ENCODE measurements at regions of chr14 and their contacts with region 1.

Region 1: GRCh38 chr14:103333754-103334643 is at the start of gene EIF5:
- DNase-seq: peak; percentile 94
- ATAC-seq: peak; percentile 92
- H3K4me3 ChIP-seq: peak within 1 kb of the TSS; percentile 90 to 98 (median 97)
- H3K27ac ChIP-seq: peak within 1 kb of the TSS; percentile 97
- H3K4me1 ChIP-seq: peaks cover 60% of the 10 kb centered on the region
- H3K27me3 ChIP-seq: no peaks in the 10 kb centered on the region; a peak in 1 of 5 replicates
- CTCF ChIP-seq: peak; percentile 23; the same call in 1 of the 2 replicates
- EP300 ChIP-seq: peak in 1 of 2 experiments; percentile 47; a peak in 1 of 4 replicates
- POLR2A ChIP-seq: peak; percentile 97 to 99
- RAD21 ChIP-seq: peak; percentile 66
- total RNA-seq, gene EIF5: 281 and 333 TPM in 2 replicates

Region 2: DNA sequence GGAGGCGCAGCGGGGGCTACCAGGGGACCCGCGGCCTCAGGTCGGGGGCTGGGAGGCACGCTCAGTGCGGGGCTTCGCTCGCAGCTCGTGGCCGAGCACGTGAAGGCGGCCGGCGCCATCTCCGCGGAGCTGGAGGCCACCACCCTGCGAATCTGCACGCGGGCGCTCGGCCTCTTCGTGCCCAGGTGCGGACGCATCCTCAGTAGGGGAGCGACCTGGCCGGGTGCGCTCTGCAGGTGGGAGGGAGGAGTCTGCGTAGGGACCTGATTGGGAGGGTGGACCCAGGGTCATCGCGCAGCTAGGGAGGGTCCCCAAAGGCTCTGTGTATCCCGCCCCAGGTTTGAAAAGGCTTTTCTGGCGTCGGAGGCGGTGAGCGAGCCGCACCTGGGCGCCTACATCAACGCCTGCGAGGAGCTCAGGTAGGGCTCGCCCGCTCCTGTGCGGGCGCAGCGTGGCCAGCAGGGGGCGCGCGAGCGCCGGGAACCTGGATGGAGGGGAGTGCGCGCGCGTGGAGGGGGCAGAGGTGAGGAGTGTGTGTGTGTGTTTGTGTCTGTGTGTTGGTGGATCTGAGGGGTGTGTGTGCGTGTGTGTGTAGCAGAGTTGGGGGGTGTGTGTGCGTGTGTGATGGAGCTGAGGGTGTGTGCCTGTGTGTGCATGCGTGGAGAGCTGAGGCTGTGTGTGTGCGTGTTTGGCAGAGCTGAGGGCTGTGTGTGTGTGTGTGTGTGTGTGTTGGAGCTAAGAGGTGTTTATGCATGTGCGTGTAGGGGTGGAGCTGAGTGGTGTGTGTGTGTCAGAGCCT is 229.1 kb before region 1 on chr14:
- CTCF ChIA-PET with region 1: no interaction called
- POLR2A ChIA-PET with region 1: interaction called, 23 read pairs
- in situ Hi-C with region 1: no loop called
- intact Hi-C with region 1: no loop called
- DNase-seq: no peak
- ATAC-seq: peak; percentile 54
- H3K4me3 ChIP-seq: peak overlapping the region; percentile 43 to 71 (median 61)
- H3K27ac ChIP-seq: peak overlapping the region; percentile 76
- H3K4me1 ChIP-seq: peaks cover 87% of the 10 kb centered on the region
- H3K27me3 ChIP-seq: no peaks in the 10 kb centered on the region
- CTCF ChIP-seq: peak; percentile 99
- EP300 ChIP-seq: no peak
- POLR2A ChIP-seq: peak in 1 of 2 experiments; percentile 47; a peak in 1 of 4 replicates
- RAD21 ChIP-seq: peak; percentile 92

Region 3: DNA sequence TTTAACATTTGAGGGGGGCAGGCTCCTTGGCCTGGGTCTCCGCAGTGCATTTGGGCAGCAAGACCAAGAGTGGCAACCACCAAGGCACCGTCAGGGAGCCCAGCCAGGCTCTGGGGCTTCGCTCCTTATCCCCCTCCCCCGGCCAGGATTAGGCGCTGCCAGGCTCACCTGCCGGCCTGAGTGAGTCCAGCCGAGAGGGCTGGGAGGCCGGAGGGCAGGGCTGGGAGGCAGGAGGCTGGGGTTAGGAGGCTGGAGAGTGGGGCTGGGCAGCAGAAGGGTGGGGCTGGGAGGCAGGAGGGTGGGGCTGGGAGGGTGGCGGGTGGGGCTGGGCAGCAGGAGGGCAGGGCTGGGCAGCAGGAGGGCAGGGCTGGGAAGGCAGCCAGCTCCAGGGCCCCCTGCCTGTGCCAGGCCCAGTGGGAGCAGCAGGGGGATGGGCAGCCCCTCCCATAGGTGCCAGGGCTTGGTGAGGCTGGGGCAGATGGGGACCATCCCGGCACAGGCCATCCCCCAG is 101.6 kb before region 1 on chr14:
- CTCF ChIA-PET with region 1: no interaction called
- POLR2A ChIA-PET with region 1: no interaction called
- in situ Hi-C with region 1: no loop called
- intact Hi-C with region 1: no loop called
- DNase-seq: no peak
- ATAC-seq: no peak
- H3K4me3 ChIP-seq: no peak overlapping the region
- H3K27ac ChIP-seq: no peak overlapping the region
- H3K4me1 ChIP-seq: peaks cover 13% of the 10 kb centered on the region; the same call in 1 of the 2 replicates
- H3K27me3 ChIP-seq: peaks cover 6 to 20% of the 10 kb centered on the region in 2 experiments
- CTCF ChIP-seq: no peak
- EP300 ChIP-seq: no peak
- POLR2A ChIP-seq: no peak
- RAD21 ChIP-seq: no peak

Region 4: GRCh38 chr14:103273145-103273744 is 60.8 kb before region 1 on chr14:
- CTCF ChIA-PET with region 1: no interaction called
- POLR2A ChIA-PET with region 1: no interaction called
- in situ Hi-C with region 1: no loop called
- intact Hi-C with region 1: no loop called
- DNase-seq: no peak
- ATAC-seq: no peak
- H3K4me3 ChIP-seq: no peak overlapping the region
- H3K27ac ChIP-seq: no peak overlapping the region
- H3K4me1 ChIP-seq: no peaks in the 10 kb centered on the region
- H3K27me3 ChIP-seq: peaks cover 0 to 1% of the 10 kb centered on the region in 2 experiments; a peak in 1 of 5 replicates
- CTCF ChIP-seq: no peak
- EP300 ChIP-seq: no peak
- POLR2A ChIP-seq: no peak
- RAD21 ChIP-seq: no peak

Region 5: GRCh38 chr14:103346286-103346685 is 12.3 kb after region 1 on chr14:
- CTCF ChIA-PET with region 1: no interaction called
- POLR2A ChIA-PET with region 1: interaction called, 87 read pairs
- in situ Hi-C with region 1: no loop called
- intact Hi-C with region 1: no loop called
- DNase-seq: no peak
- ATAC-seq: no peak
- H3K4me3 ChIP-seq: no peak overlapping the region
- H3K27ac ChIP-seq: no peak overlapping the region
- H3K4me1 ChIP-seq: peaks cover 38% of the 10 kb centered on the region
- H3K27me3 ChIP-seq: no peaks in the 10 kb centered on the region
- CTCF ChIP-seq: no peak
- EP300 ChIP-seq: no peak
- POLR2A ChIP-seq: peak in 1 of 2 experiments; percentile 11; a peak in 1 of 4 replicates
- RAD21 ChIP-seq: no peak

Region 6: GRCh38 chr14:103378038-103378854 is 44.2 kb after region 1 on chr14:
- CTCF ChIA-PET with region 1: no interaction called
- POLR2A ChIA-PET with region 1: interaction called, 14 read pairs
- in situ Hi-C with region 1: no loop called
- intact Hi-C with region 1: no loop called
- DNase-seq: peak; percentile 52
- ATAC-seq: peak; percentile 83
- H3K4me3 ChIP-seq: peak overlapping the region; percentile 26 to 66 (median 45)
- H3K27ac ChIP-seq: peak overlapping the region; percentile 50
- H3K4me1 ChIP-seq: peaks cover 26% of the 10 kb centered on the region
- H3K27me3 ChIP-seq: peaks cover 1 to 4% of the 10 kb centered on the region in 2 experiments; a peak in 4 of 5 replicates
- CTCF ChIP-seq: no peak
- EP300 ChIP-seq: no peak
- POLR2A ChIP-seq: peak in 1 of 2 experiments; percentile 36; a peak in 2 of 4 replicates
- RAD21 ChIP-seq: no peak

Region 7: GRCh38 chr14:103628684-103629502 is 294.9 kb after region 1 on chr14 and contains the start of gene KLC1:
- CTCF ChIA-PET with region 1: no interaction called
- POLR2A ChIA-PET with region 1: no interaction called
- in situ Hi-C with region 1: no loop called
- intact Hi-C with region 1: no loop called
- DNase-seq: no peak
- ATAC-seq: peak; percentile 62
- H3K4me3 ChIP-seq: peak within 1 kb of the TSS; percentile 86 to 99 (median 98)
- H3K27ac ChIP-seq: peak within 1 kb of the TSS; percentile 87
- H3K4me1 ChIP-seq: peaks cover 52% of the 10 kb centered on the region
- H3K27me3 ChIP-seq: no peaks in the 10 kb centered on the region; a peak in 1 of 5 replicates
- CTCF ChIP-seq: no peak
- EP300 ChIP-seq: no peak
- POLR2A ChIP-seq: peak; percentile 68 to 93
- RAD21 ChIP-seq: peak; percentile 44; the same call in 1 of the 2 replicates
- total RNA-seq, gene KLC1: 57.8 and 63.5 TPM in 2 replicates